Activated B cell treated with CpG ODN at 0.5 μM for 24 hours (primary cell): ENCODE measurements at regions of chr6 and their contacts with region 1.

Region 1: DNA sequence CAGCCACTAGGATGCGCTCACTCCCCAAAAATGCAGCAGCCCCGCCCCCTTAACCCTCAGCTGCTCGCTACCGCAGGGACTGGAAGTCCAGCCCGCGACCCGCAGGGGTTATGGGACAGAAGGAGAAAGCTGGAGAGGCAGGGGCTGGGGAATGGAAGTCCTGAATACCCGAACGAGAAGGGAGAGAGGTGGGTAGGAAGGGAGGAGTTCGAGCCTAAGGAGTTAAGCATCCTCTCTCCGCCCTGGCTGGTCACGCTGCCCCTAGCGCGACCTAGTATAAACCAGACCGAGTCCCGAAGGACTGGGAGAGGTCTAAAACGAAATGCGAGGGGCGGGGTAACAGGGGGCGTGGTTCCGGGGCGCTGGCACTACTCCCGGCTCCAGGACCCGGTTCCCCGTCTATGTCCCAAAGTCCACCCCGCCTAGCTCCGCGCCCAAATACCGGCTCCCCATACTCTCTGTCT is 448 bp upstream of the DDAH2 start:
- DNase-seq: peak; percentile 73
- ATAC-seq: peak; percentile 45
- H3K4me3 Mint-ChIP-seq: peak overlapping the region; percentile 97
- H3K27ac Mint-ChIP-seq: peak overlapping the region; percentile 92
- H3K4me1 Mint-ChIP-seq: peaks cover 71% of the 10 kb centered on the region
- H3K27me3 Mint-ChIP-seq: no peaks in the 10 kb centered on the region
- CTCF ChIP-seq: no peak

Region 2: DNA sequence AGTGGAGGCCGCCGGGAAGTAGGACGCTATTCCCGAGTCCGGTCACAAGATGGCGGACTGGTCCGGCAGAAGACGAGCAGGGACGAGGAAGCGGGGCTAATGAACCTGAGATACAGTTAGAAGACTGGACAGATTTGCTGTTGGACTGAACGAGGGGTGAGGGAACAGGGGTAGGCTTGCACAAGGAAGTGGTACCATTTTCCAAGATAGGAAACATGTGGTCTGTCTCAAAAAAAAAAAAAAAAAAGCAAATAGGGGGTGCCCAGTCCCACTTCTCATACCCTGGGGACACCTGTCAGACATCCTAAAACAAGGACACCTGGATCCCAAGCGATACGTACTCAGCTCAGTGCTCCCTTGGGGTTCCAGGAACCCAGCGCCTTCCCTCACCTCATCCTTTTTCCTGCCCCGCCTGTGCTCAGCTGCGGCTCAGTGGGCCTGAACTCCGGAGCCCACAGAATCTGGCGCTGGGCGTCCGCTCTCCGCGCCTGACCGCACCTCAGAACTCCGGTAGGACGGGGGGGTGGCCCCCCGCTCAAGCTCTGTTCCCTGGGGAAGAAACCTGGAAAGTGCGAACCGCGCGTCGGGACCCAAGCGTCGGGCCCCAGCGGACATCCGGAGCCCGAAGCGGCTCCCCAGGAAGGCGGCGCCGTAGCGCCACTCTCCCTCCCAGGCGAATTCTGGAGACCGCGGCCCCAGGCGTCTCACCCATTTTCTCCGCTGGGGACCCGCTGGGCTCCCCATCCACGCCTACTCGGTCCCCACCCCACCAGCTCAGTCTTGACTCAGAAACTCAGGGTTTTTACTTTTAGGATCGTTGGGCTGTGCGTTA is 48.5 kb before region 1 on chr6 and contains the start of gene LY6G5C:
- CTCF ChIA-PET with region 1: interaction called, 5 read pairs
- POLR2A ChIA-PET with region 1: interaction called, 8 read pairs
- intact Hi-C with region 1: loop called (anchors 2 kb)
- DNase-seq: peak; percentile 46
- ATAC-seq: peak; percentile 75
- H3K4me3 Mint-ChIP-seq: peak within 1 kb of the TSS; percentile 84
- H3K27ac Mint-ChIP-seq: peak within 1 kb of the TSS; percentile 72
- H3K4me1 Mint-ChIP-seq: peaks cover 40% of the 10 kb centered on the region
- H3K27me3 Mint-ChIP-seq: no peaks in the 10 kb centered on the region
- CTCF ChIP-seq: no peak
- total RNA-seq, gene LY6G5C: 0.29 and 0.73 TPM in 2 replicates

Region 3: DNA sequence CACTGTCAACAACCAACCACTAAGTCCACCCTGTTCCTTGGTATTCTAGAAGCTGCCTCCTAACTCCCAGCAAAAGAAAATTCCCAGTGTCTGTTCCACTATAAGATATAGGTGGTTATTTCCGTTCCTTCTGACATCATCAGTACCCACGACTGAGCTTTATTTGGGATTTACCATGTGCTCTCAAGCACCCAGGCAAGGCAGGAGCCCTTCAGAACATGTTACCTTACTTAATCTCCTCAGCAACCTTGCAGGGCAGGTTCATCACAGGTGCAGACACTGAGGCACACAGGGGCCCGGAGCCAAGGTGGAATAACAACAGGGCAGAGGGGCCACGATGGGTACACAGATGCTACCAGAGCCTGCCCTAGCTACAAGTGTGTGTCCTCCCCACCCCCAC is 37.2 kb before region 1 on chr6:
- CTCF ChIA-PET with region 1: no interaction called
- POLR2A ChIA-PET with region 1: no interaction called
- intact Hi-C with region 1: no loop called
- DNase-seq: no peak
- ATAC-seq: no peak
- H3K4me3 Mint-ChIP-seq: no peak overlapping the region
- H3K27ac Mint-ChIP-seq: no peak overlapping the region
- H3K4me1 Mint-ChIP-seq: peaks cover 15% of the 10 kb centered on the region
- H3K27me3 Mint-ChIP-seq: no peaks in the 10 kb centered on the region
- CTCF ChIP-seq: no peak

Region 4: DNA sequence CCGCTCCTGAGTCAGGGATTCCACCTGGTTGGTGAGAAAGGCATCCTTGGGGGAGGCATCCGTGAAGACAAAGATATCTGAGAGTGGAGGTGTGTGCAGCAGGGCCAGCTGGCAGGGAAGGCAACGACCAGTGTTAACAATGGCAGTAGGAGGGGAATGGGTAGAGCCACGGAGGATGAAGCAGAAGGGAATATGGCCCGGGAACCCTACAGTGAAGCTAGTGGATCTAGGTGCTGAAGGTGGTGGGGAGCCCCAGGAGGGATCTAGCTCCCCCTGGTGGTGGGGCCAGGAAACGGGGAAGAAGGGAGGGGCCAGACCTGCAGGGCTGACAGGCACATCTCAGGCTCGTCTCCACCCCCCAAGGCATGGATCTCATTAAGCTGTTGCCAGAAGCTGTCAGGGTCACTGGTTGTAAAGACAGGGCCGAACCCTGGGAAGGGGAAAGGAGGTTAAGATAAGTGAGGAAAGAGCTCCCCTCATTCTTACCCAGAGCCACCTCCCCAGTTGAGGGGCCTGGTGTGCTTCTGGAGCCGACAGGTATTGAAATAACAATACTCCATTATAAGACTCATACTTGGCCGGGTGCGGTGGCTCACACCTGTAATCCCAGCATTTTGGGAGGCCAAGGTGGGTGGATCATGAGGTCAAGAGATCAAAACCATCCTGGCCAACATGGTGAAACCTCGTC is 40.3 kb after region 1 on chr6:
- CTCF ChIA-PET with region 1: interaction called, 49 read pairs
- POLR2A ChIA-PET with region 1: interaction called, 14 read pairs
- intact Hi-C with region 1: loop called (anchors 1 kb)
- DNase-seq: peak; percentile 76
- ATAC-seq: peak; percentile 98
- H3K4me3 Mint-ChIP-seq: no peak overlapping the region
- H3K27ac Mint-ChIP-seq: no peak overlapping the region
- H3K4me1 Mint-ChIP-seq: peaks cover 16% of the 10 kb centered on the region
- H3K27me3 Mint-ChIP-seq: no peaks in the 10 kb centered on the region
- CTCF ChIP-seq: no peak

Region 5: DNA sequence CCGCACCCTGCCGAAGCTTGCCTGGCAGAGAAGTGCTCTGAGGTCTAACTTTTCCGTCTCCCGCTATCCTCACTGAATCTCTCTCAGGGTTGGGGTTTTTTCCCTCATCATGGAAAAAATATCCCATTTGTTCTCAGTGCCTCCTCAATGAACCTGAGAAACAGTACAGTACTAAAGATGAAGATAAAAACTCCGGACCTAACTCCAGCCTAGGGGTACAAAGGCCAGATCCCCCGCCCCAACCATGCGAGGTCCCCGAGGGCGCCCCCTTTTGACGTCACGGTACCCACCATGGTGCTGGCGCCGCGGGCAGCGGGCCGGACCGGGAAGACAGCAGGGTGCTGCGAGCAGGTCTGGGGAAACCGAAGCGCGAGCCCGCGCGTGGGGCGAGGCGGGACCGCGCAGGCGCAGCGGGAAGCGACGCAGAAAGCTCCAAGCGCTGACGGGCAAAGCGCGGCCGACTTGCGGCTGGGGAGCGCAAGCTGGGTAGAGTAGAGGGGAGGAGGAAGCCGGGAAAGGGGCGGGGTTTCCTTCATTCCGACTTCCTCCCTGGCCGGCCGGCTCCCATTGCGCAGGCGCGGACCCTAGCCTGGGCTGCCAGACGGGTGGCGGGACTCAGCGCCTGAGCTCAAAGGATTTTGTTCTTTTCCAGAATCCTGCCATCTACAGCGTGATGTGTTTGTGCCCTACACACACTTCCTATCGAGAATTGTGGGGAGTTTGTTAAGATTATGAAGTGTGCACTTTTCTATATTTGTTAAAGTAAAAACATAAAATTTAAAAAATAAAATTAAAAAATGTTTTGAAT is 77.1 kb after region 1 on chr6 and contains the start of gene LSM2:
- CTCF ChIA-PET with region 1: interaction called, 9 read pairs
- POLR2A ChIA-PET with region 1: interaction called, 55 read pairs
- intact Hi-C with region 1: no loop called
- DNase-seq: peak; percentile 89
- ATAC-seq: peak; percentile 98
- H3K4me3 Mint-ChIP-seq: peak within 1 kb of the TSS; percentile 94
- H3K27ac Mint-ChIP-seq: peak within 1 kb of the TSS; percentile 89
- H3K4me1 Mint-ChIP-seq: peaks cover 16% of the 10 kb centered on the region
- H3K27me3 Mint-ChIP-seq: no peaks in the 10 kb centered on the region
- CTCF ChIP-seq: no peak
- total RNA-seq, gene LSM2: 61.8 and 68.6 TPM in 2 replicates

Region 6: GRCh38 chr6:31834434-31835198 is 105.1 kb after region 1 on chr6:
- CTCF ChIA-PET with region 1: interaction called, 14 read pairs
- POLR2A ChIA-PET with region 1: interaction called, 31 read pairs
- intact Hi-C with region 1: loop called (anchors 1 kb)
- DNase-seq: peak; percentile 75
- ATAC-seq: peak; percentile 62
- H3K4me3 Mint-ChIP-seq: peak overlapping the region; percentile 99
- H3K27ac Mint-ChIP-seq: peak overlapping the region; percentile 98
- H3K4me1 Mint-ChIP-seq: peaks cover 71% of the 10 kb centered on the region
- H3K27me3 Mint-ChIP-seq: no peaks in the 10 kb centered on the region
- CTCF ChIP-seq: no peak

Region 7: DNA sequence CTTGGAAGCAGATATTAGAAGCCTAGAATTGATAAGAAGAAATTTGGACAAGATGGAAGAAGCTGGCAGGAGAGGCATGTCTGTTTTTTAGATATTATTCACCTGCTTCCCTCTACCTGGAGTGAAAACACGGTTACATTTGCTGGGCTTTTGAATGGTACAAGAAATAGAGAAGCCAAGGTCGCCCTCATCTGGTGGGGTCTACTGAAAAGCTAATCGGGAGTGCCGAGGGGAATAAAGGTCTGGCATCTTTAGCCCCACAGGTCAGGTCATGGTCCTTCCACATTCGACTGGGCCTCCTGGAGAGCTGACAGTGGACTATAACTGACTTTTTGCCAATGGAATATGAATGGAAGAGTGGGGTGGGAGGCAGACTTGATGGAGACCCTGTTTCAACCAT is 193.4 kb after region 1 on chr6:
- CTCF ChIA-PET with region 1: no interaction called
- POLR2A ChIA-PET with region 1: no interaction called
- intact Hi-C with region 1: loop called (anchors 1 kb)
- DNase-seq: no peak
- ATAC-seq: peak; percentile 37
- H3K4me3 Mint-ChIP-seq: no peak overlapping the region
- H3K27ac Mint-ChIP-seq: no peak overlapping the region
- H3K4me1 Mint-ChIP-seq: no peaks in the 10 kb centered on the region
- H3K27me3 Mint-ChIP-seq: peaks cover 2% of the 10 kb centered on the region
- CTCF ChIP-seq: no peak

Region 8: DNA sequence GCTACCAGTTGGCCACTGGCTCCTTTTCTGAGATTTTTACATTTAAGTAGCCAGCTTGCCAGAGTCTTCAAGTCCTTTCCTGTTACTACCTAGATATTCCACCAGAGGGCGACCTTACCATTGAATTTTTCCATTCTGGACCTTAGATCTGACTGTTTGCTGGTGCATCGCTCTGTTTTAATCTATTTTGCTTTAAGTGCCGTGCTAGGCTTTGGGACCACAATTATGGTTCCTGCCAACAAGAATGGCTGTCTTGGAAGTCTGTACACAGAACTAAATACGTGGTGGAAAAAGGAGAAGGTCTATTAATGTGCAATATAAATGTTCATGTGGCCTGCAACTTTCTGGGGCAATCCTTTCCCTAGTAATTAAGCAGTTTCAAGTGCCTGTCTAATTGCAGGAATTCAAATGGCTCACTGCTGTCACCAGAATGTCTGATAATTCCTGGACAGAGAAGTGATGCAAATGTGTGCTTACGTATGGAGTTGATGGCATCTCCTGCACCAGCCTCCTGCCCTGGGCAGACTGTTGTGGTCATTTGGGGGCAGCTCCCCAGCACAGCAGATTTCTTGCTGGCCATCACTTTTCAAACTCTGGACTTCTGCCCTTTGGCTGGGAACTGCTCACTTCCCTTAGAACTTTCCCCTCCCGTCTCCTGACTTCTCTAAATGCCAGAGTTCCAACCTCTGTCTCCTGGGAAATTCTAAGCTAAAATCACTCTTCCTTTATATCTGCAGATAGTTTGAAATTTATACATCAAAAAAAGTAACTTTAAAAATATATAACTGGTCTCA is 1285.5 kb after region 1 on chr6:
- CTCF ChIA-PET with region 1: no interaction called
- POLR2A ChIA-PET with region 1: no interaction called
- intact Hi-C with region 1: no loop called
- DNase-seq: no peak
- ATAC-seq: peak; percentile 34
- H3K4me3 Mint-ChIP-seq: peak overlapping the region; percentile 71
- H3K27ac Mint-ChIP-seq: peak overlapping the region; percentile 98
- H3K4me1 Mint-ChIP-seq: peaks cover 69% of the 10 kb centered on the region
- H3K27me3 Mint-ChIP-seq: no peaks in the 10 kb centered on the region
- CTCF ChIP-seq: no peak

Region 9: DNA sequence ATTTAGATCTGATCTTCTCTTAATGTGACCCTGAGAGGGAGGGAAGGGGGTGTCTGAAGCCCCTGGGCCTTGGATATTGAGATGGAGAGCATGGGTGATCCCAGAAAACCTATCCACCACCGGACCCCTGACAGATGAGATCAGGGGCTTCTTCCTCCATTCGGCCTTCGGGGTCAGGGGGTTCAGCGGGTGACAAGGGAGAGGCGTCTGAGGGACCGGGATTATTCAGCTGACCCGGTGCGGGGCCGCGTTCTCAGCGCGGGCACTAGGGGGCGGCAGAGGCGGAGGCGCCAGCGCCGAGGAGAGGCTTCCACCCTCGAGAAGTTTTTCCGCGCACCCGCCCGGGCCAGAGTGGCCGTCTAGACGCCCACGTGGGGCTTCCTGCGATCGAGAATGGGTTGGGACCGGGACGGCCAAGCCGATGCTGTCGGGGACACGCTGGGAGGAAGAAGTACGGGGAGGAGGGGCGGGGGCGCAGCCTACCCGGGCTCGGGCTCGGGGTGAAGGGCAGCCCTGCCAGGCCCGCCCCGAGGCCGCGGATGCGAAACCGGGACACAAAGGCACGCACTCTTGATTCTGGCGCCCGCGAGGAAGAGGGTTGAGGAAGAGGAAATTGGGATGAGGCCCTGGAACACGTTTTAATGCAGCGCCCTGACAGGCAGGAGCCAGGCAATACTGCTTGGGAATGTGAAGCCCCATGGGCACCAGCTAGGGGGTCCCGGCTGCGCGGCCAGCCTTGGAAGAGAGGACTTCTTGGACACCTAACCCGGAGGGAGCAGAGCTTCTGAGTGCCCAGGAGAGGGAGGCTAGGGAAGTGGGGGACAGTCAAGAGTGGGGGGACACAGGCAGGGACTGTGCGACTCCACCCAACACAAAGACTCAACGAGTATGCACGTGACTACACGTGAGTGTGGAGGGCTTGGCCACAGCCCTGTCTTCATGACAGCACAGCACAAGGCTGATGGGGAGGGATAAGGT is 1432.1 kb after region 1 on chr6:
- CTCF ChIA-PET with region 1: no interaction called
- POLR2A ChIA-PET with region 1: no interaction called
- intact Hi-C with region 1: no loop called
- DNase-seq: peak; percentile 84
- ATAC-seq: peak; percentile 98
- H3K4me3 Mint-ChIP-seq: peak overlapping the region; percentile 92
- H3K27ac Mint-ChIP-seq: peak overlapping the region; percentile 65
- H3K4me1 Mint-ChIP-seq: peaks cover 13% of the 10 kb centered on the region
- H3K27me3 Mint-ChIP-seq: peaks cover 1% of the 10 kb centered on the region
- CTCF ChIP-seq: peak; percentile 47